ENCODE measurements at regions of chr21 and their contacts with region 1.

Region 1: GRCh38 chr21:45033791-45034555 is 40.4 kb upstream of the ADARB1 start:
- DNase-seq: no peak
- ATAC-seq: peak in 1 of 4 donors; percentile 30
- H3K4me3 ChIP-seq: no peak overlapping the region
- H3K27ac ChIP-seq: no peak overlapping the region
- H3K4me1 ChIP-seq: peaks cover 0 to 4% (median 3%) of the 10 kb centered on the region in 3 donors
- H3K27me3 ChIP-seq: no peaks in the 10 kb centered on the region
- CTCF ChIP-seq: no peak

Region 2: DNA sequence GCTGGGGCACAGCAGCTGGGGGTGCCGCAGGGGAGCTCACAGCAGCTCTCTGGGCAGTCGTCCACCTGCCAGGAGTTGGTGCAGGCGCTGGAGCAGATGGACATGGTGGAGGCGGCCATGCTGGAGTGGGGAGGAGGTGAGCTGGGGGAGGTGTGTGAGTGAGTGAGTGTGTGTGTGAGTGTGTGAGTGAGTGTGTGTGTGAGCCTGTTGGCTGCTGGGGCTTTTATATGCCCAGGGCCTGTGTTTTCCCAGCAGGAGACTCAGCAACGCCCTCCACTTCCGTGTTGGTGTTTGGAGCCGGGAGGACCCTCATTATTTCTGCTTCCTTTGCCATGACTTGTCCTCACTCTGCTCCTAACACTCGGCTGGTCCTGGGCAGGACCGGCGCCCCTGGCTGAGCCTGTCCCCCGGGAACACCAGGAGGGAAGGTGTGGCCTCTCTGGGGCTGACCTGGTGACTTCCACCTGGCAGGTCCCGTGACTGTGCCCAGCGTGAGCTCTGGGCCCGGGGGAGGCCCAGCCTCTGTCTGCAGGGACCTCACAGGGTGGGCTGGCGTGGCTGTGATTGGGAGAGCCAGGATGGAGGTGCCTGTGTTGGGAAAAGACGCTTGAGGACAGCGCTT is 482.5 kb before region 1 on chr21 and contains the start of gene KRTAP10-2:
- intact Hi-C with region 1: no loop called
- DNase-seq: no peak
- ATAC-seq: no peak
- H3K4me3 ChIP-seq: no peak within 1 kb of the TSS
- H3K27ac ChIP-seq: no peak within 1 kb of the TSS
- H3K4me1 ChIP-seq: no peaks in the 10 kb centered on the region
- H3K27me3 ChIP-seq: peaks cover 0 to 12% (median 0%) of the 10 kb centered on the region in 4 donors
- CTCF ChIP-seq: no peak
- total RNA-seq, gene KRTAP10-2: not detected

Region 3: DNA sequence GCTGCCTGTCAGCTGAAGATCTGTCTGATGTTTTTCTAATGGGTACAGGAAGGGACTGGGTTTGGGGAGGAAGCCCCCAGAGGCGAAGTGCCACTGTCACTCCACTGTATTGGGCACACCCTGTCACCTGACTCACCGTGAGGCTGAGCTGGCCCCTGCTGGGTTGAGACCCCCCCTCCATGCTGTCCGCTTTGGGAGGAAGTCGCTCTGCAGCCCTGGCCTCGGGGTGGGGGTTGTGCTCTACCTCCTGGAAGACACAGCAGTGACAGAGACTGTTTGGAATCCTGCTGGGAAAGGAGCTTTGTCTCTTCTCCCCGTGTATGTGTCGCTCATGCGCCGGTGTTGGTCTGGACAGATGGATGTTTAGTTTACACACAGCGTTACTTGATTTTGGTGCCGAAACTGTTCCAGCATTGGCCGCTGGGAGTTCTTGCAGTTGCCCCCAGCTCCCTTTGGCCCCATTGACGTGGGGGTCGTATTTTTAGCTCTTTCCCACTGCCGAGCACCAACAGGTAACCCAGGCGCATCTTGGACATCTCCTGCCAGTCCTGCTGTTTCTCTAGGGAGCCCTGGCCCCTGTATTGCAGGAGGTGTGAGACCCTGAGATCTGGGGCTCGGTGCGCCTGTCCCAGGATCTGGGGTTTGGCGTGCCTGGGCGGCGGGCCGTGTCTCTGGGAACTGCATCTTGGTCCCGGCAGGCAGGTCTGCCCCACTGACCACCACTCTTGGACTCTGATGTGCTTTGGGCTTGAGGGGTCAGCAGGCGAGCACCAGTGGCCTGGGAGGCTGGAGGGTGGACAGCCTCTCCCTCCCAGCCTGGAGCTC is 63.8 kb before region 1 on chr21:
- intact Hi-C with region 1: loop called in 1 of 3 experiments (anchors 10 kb)
- DNase-seq: peak in 1 of 6 donors; percentile 50
- ATAC-seq: peak in 2 of 4 donors; percentile 10 to 11
- H3K4me3 ChIP-seq: no peak overlapping the region
- H3K27ac ChIP-seq: no peak overlapping the region
- H3K4me1 ChIP-seq: no peaks in the 10 kb centered on the region
- H3K27me3 ChIP-seq: no peaks in the 10 kb centered on the region
- CTCF ChIP-seq: no peak

Region 4: DNA sequence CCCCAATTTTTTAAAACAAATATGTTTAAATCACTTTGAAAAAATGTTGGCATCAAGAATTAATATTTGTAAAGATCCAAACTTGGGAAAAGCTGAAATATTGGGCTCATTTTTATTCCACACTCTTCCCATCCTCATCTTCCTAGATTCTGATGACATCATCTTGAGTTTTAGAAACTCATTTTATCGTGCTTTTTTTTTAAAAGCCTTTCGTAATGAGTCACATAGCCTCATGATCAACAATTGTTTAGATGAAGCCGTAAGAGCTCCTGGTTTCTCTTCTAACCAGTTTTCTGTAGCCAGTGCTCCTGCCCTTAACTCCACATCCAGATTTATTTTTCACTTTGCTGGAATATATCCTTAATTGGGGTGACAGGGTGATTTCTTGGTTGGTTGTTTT is 175.1 kb after region 1 on chr21:
- intact Hi-C with region 1: no loop called
- DNase-seq: no peak
- ATAC-seq: no peak
- H3K4me3 ChIP-seq: no peak overlapping the region
- H3K27ac ChIP-seq: no peak overlapping the region
- H3K4me1 ChIP-seq: no peaks in the 10 kb centered on the region
- H3K27me3 ChIP-seq: no peaks in the 10 kb centered on the region
- CTCF ChIP-seq: no peak

Region 5: DNA sequence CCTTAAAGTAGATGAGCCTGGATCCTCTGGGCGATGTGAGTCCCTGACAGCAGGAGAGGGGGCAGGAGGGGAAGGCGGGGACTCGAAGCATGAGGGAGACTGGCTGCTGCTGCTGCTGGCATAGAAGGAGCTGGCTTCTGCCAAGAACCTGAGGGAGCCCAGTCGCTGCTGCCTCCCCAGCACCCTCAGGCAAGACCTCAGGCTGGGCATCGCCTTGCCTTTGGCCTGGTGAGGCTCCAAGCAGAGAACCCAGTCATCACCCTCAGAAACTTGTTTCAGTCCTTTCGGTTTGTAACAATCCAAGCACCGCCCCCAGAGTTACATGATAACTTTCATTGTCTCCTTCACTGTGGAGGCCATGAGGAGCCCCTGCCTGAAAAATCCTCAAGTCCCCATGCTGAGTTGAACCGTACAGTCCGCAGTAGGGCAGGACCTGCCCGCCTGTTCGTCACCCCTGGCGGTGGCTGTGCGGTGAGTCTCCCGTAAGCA is 215.0 kb after region 1 on chr21:
- intact Hi-C with region 1: no loop called
- DNase-seq: peak in 1 of 6 donors; percentile 16
- ATAC-seq: peak in 3 of 4 donors; percentile 54 to 74 (median 70)
- H3K4me3 ChIP-seq: peak overlapping the region in 1 of 4 donors; percentile 22
- H3K27ac ChIP-seq: no peak overlapping the region
- H3K4me1 ChIP-seq: no peaks in the 10 kb centered on the region
- H3K27me3 ChIP-seq: peaks cover 0 to 6% (median 0%) of the 10 kb centered on the region in 4 donors
- CTCF ChIP-seq: no peak

Region 6: GRCh38 chr21:45880097-45881068 is 846.4 kb after region 1 on chr21:
- intact Hi-C with region 1: no loop called
- DNase-seq: peak in 5 of 6 donors; percentile 20 to 77 (median 60)
- ATAC-seq: peak in 3 of 4 donors; percentile 84 to 85 (median 85)
- H3K4me3 ChIP-seq: no peak overlapping the region
- H3K27ac ChIP-seq: no peak overlapping the region
- H3K4me1 ChIP-seq: no peaks in the 10 kb centered on the region
- H3K27me3 ChIP-seq: no peaks in the 10 kb centered on the region
- CTCF ChIP-seq: peak; percentile 27 to 58 (median 38)